ENCODE measurements at regions of chr7 and their contacts with region 1.

Region 1: GRCh38 chr7:16982640-16983350 is 101.0 kb upstream of the AGR3 start:
- DNase-seq: peak; percentile 30
- H3K4me3 ChIP-seq: no peak overlapping the region
- H3K27ac ChIP-seq: no peak overlapping the region
- H3K4me1 ChIP-seq: peaks cover 19% of the 10 kb centered on the region
- H3K27me3 ChIP-seq: no peaks in the 10 kb centered on the region
- CTCF ChIP-seq: peak; percentile 95 to 96

Region 2: GRCh38 chr7:16916111-16916682 is 66.6 kb before region 1 on chr7:
- CTCF ChIA-PET with region 1: no interaction called
- dilution Hi-C with region 1: no loop called
- in situ Hi-C with region 1: no loop called
- intact Hi-C with region 1: no loop called
- DNase-seq: peak; percentile 89
- H3K4me3 ChIP-seq: peak overlapping the region; percentile 21 to 45 (median 27)
- H3K27ac ChIP-seq: peak overlapping the region; percentile 62
- H3K4me1 ChIP-seq: peaks cover 33% of the 10 kb centered on the region
- H3K27me3 ChIP-seq: no peaks in the 10 kb centered on the region
- CTCF ChIP-seq: no peak

Region 3: GRCh38 chr7:16944936-16945335 is 37.9 kb before region 1 on chr7:
- CTCF ChIA-PET with region 1: no interaction called
- dilution Hi-C with region 1: no loop called
- in situ Hi-C with region 1: no loop called
- intact Hi-C with region 1: no loop called
- DNase-seq: no peak
- H3K4me3 ChIP-seq: no peak overlapping the region
- H3K27ac ChIP-seq: no peak overlapping the region
- H3K4me1 ChIP-seq: no peaks in the 10 kb centered on the region
- H3K27me3 ChIP-seq: no peaks in the 10 kb centered on the region
- CTCF ChIP-seq: no peak

Region 4: DNA sequence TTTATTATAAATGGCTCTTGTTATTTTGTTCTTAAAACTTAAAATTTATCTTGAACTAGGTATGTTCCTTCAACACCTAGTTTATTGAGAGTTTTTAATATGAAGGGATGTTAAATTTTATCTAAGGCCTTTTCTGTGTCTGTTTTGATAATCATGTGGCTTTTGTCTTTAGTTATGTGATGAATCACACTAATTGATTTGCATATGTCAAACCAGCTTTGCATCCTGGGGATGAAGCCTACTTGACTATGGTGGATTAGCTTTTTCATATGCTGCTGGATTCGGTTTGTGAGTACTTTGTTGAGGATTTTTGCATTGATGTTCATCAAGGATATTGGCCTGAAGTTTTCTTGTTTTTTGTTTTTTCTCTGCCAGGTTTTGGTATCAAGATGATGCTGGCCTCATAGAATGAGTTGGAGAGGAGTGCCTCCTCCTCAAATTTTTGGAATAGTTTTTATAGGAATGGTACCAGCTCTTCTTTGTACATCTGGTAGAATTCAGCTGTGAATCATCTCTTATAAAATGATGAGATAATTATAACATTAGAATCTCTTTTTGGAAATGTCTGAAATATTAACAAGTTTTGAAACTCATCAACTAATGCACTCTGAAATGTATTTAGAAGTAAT is 22.3 kb before region 1 on chr7:
- CTCF ChIA-PET with region 1: interaction called, 38 read pairs
- dilution Hi-C with region 1: no loop called
- in situ Hi-C with region 1: no loop called
- intact Hi-C with region 1: no loop called
- DNase-seq: no peak
- H3K4me3 ChIP-seq: no peak overlapping the region
- H3K27ac ChIP-seq: no peak overlapping the region
- H3K4me1 ChIP-seq: no peaks in the 10 kb centered on the region
- H3K27me3 ChIP-seq: no peaks in the 10 kb centered on the region
- CTCF ChIP-seq: no peak

Region 5: GRCh38 chr7:17046666-17047065 is 63.9 kb after region 1 on chr7:
- CTCF ChIA-PET with region 1: no interaction called
- dilution Hi-C with region 1: no loop called
- in situ Hi-C with region 1: no loop called
- intact Hi-C with region 1: no loop called
- DNase-seq: no peak
- H3K4me3 ChIP-seq: no peak overlapping the region
- H3K27ac ChIP-seq: no peak overlapping the region
- H3K4me1 ChIP-seq: peaks cover 15% of the 10 kb centered on the region
- H3K27me3 ChIP-seq: no peaks in the 10 kb centered on the region
- CTCF ChIP-seq: no peak

Region 6: DNA sequence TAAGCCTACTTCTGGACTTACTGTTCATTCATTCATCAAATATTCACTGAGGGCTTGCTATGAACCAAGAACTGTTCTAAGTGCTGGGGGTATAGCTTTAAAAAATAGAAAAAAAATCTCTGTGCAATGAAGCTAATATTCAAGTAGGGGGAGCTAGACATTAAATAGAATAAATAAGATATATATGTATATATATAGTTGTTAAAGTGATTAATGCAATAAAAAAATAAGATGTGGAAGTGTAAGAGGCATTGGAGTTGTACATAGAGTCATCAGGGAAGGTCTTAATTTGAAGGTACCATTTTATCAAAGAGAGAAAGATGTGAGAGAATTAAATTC is 80.2 kb after region 1 on chr7:
- CTCF ChIA-PET with region 1: interaction called, 4 read pairs
- dilution Hi-C with region 1: no loop called
- in situ Hi-C with region 1: no loop called
- intact Hi-C with region 1: loop called (anchors 2 kb)
- DNase-seq: no peak
- H3K4me3 ChIP-seq: no peak overlapping the region
- H3K27ac ChIP-seq: no peak overlapping the region
- H3K4me1 ChIP-seq: peaks cover 1% of the 10 kb centered on the region
- H3K27me3 ChIP-seq: no peaks in the 10 kb centered on the region
- CTCF ChIP-seq: peak; percentile 37 to 46

Region 7: DNA sequence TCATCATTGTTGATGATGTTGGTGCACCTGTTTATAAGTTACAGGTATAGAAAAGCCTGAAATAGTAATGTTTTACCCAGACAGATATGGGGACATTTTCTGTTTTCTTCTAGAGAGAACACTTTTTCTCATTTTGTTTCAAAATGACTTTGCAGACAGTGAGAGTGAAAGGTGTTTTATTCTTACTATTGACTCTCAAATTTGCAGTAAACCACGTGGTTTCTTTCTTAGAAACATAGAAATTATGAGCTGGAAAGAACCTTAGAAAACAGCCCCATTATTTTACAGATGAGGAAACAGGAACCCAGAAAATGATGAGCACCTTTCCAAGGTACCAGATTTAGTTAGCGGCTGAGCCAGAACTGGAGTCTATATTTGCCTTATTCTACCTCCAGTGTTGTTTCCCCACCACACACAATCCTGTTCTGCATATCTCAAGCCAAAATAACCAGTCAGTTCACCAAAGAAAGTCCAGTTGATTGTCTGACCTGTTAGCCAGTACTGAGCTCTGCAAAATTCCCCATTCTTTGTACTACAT is 176.8 kb after region 1 on chr7:
- CTCF ChIA-PET with region 1: no interaction called
- dilution Hi-C with region 1: no loop called
- in situ Hi-C with region 1: no loop called
- intact Hi-C with region 1: loop called (anchors 2 kb)
- DNase-seq: no peak
- H3K4me3 ChIP-seq: no peak overlapping the region
- H3K27ac ChIP-seq: no peak overlapping the region
- H3K4me1 ChIP-seq: no peaks in the 10 kb centered on the region
- H3K27me3 ChIP-seq: no peaks in the 10 kb centered on the region
- CTCF ChIP-seq: no peak

Region 8: GRCh38 chr7:17646253-17646956 is 663.6 kb after region 1 on chr7:
- CTCF ChIA-PET with region 1: no interaction called
- dilution Hi-C with region 1: no loop called
- in situ Hi-C with region 1: loop called in 1 of 2 experiments (anchors 25 kb)
- intact Hi-C with region 1: loop called (anchors 1 kb)
- DNase-seq: peak; percentile 57
- H3K4me3 ChIP-seq: no peak overlapping the region
- H3K27ac ChIP-seq: no peak overlapping the region
- H3K4me1 ChIP-seq: peaks cover 8% of the 10 kb centered on the region
- H3K27me3 ChIP-seq: no peaks in the 10 kb centered on the region
- CTCF ChIP-seq: peak; percentile 40 to 53

Measured in mammary epithelial cell (primary cell).